AG04449 (cell line): ENCODE measurements at regions of chr3 and their contacts with region 1.

Region 1: GRCh38 chr3:112111785-112112402 is 21.2 kb downstream of the GCSAM start:
- DNase-seq: no peak
- H3K4me3 ChIP-seq: no peak overlapping the region
- CTCF ChIP-seq: peak; percentile 80

Region 2: GRCh38 chr3:111944377-111944776 is 167.5 kb before region 1 on chr3:
- CTCF ChIA-PET with region 1: no interaction called
- POLR2A ChIA-PET with region 1: no interaction called
- DNase-seq: no peak
- H3K4me3 ChIP-seq: no peak overlapping the region
- CTCF ChIP-seq: no peak

Region 3: GRCh38 chr3:111956995-111957734 is 154.7 kb before region 1 on chr3:
- CTCF ChIA-PET with region 1: no interaction called
- POLR2A ChIA-PET with region 1: no interaction called
- DNase-seq: no peak
- H3K4me3 ChIP-seq: no peak overlapping the region
- CTCF ChIP-seq: no peak

Region 4: DNA sequence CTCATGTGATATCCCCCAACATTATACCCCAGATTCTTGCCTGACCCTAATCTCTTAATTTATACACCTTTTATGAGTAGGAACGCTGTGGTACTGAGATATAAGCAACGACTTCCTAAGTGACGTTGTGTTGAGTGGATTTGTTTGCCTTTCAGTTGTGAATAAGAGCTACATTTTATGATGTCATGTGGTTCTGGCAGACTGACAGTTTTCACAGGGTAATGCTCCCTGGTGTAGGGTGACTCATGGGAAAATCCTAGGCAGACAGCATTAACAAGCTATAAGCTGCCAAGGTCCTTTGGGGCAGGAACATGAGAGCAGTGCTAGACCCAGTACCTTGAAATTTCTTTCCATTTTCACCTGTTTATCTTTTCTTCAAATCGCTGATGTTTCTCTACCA is 14.5 kb before region 1 on chr3:
- CTCF ChIA-PET with region 1: interaction called, 35 read pairs
- POLR2A ChIA-PET with region 1: no interaction called
- DNase-seq: peak; percentile 98
- H3K4me3 ChIP-seq: no peak overlapping the region
- CTCF ChIP-seq: no peak

Region 5: GRCh38 chr3:112128843-112129727 is 17.2 kb after region 1 on chr3:
- CTCF ChIA-PET with region 1: interaction called, 16 read pairs
- POLR2A ChIA-PET with region 1: no interaction called
- DNase-seq: no peak
- H3K4me3 ChIP-seq: no peak overlapping the region
- CTCF ChIP-seq: no peak

Region 6: DNA sequence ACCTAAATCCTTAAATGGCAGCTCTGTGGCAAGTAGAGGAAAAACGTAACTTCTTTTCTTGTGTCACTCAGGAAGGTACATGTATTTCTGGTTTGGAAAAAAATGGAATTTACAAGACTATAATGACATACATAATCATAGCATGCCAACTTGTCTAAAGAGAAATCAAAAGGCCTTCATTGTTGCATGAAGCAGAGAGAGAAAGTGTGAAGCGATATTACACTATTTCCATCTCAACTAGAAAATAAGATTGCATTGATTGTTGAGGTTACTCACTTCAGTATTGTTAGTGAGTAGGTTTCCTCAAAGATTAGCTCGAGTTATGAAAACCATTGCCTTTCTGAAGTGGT is 88.4 kb after region 1 on chr3:
- CTCF ChIA-PET with region 1: no interaction called
- POLR2A ChIA-PET with region 1: no interaction called
- DNase-seq: no peak
- H3K4me3 ChIP-seq: no peak overlapping the region
- CTCF ChIP-seq: no peak

Region 7: DNA sequence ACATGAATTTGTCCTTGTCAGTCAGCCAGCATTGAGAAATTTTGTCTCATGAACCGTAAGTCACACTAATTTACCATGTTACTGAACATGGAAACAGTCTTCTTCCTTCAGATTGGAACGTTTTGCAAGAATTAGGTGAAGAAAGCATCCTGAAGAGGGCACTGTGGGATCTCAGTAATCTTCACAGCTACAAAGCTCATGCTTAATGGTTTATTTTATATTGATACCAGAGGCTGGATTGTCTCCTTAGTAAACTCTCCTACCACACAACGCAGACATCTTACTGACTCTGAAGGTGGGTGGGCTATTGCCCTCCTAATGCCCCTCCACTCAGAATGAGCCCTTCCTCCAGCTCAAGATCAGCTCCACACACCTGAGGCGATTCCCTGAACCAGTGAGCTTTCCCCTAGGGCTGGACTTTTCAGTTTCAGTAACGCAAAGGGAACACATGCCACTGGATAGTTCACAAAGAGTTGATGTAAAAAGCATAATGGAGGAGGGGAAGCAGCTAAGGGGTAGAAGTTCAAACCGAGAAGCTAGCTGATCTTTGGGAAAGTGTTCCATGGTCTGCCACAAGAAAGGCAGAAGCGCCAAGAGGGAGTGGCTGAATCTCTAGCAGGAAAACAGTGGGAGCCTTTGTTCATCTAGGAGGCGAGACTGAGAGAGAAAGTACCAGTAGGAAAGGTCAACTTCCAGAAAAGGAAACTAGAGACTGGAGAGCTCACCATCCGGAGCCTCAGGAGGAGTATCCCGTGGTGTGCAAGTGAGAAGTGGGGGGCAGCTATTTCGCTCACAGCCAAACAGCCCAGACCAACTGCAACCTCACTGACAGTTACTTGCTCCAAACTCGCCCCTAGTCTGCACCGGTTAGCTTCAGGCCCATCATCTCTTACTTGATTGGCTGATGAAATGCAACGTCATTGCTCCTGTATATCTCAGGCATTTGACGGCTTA is 181.8 kb after region 1 on chr3 and contains the start of gene SLC9C1:
- CTCF ChIA-PET with region 1: interaction called, 13 read pairs
- POLR2A ChIA-PET with region 1: no interaction called
- DNase-seq: no peak
- H3K4me3 ChIP-seq: peak within 1 kb of the TSS; percentile 31
- CTCF ChIP-seq: peak; percentile 66

Region 8: DNA sequence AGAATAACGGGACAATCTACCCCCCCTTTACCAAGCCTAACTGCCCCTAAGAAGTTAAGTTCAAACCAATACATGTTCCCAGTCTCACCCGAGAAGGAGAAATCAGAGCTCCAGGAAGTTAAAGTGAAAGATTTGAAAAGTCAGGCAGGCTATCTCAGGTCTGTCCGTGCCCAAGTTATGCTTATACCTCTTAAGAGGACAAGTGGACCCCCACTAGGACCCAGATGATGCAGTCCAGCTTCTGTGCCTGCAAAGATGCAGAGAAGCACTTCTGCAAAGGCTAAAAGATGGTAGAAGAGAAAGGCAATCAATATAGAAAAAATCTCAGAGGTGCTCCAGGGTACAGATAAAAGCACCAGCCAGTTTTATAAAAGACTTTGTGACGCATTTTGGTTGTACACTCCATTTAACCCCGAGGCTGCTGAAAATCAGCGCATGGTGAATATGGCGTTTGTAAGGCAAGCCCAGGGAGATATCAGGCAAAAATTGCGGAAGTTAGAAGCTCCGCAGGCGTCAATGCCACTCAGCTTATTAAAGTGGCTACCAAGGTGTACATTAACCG is 192.0 kb after region 1 on chr3:
- CTCF ChIA-PET with region 1: interaction called, 14 read pairs
- POLR2A ChIA-PET with region 1: no interaction called
- DNase-seq: no peak
- H3K4me3 ChIP-seq: peak overlapping the region; percentile 54
- CTCF ChIP-seq: no peak

Region 9: GRCh38 chr3:112531358-112531781 is 419.5 kb after region 1 on chr3:
- CTCF ChIA-PET with region 1: interaction called, 14 read pairs
- POLR2A ChIA-PET with region 1: no interaction called
- DNase-seq: no peak
- H3K4me3 ChIP-seq: no peak overlapping the region
- CTCF ChIP-seq: no peak